ENCODE measurements at regions of chr5 and their contacts with region 1.

Region 1: DNA sequence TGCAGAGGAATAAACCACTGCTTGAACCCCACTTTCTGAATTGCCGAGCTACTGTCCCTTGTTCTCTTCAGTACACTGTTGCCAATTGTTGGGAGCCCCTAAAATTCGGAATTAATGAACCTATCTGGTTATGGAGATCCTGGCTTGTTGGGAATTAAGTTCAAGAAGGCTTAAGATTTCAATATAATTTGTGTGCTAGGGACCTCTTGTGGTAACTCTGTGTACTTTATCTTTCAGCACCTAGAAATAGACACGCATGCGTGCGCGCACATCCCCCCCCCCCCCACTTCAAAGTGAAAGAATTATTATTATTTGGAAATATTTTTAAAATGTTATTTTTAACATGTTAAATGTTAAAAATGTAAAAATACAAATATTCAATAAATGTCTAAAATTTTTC is 53.3 kb upstream of the FAM169A start:
- DNase-seq: no peak
- H3K4me3 ChIP-seq: no peak overlapping the region
- H3K27ac ChIP-seq: no peak overlapping the region
- H3K4me1 ChIP-seq: no peaks in the 10 kb centered on the region
- H3K27me3 ChIP-seq: peaks cover 0 to 1% (median 0%) of the 10 kb centered on the region in 4 experiments; a peak in 1 of 7 replicates
- CTCF ChIP-seq: peak in 2 of 3 experiments; percentile 41 to 55; a peak in 2 of 4 replicates
- EP300 ChIP-seq: no peak
- POLR2A ChIP-seq: no peak
- RAD21 ChIP-seq: peak; percentile 78 to 81

Region 2: GRCh38 chr5:74766849-74767578 is 152.5 kb before region 1 on chr5 and contains the starts of genes GFM2 and NSA2:
- CTCF ChIA-PET with region 1: interaction called, 10 read pairs
- POLR2A ChIA-PET with region 1: no interaction called
- DNase-seq: peak; percentile 84 to 95
- H3K4me3 ChIP-seq: peak within 1 kb of the TSS; percentile 86 to 100 (median 93)
- H3K27ac ChIP-seq: peak within 1 kb of the TSS; percentile 31; the same call in 1 of the 2 replicates
- H3K4me1 ChIP-seq: peaks cover 0 to 4% (median 2%) of the 10 kb centered on the region in 4 experiments; a peak in 2 of 7 replicates
- H3K27me3 ChIP-seq: no peaks in the 10 kb centered on the region
- CTCF ChIP-seq: no peak
- EP300 ChIP-seq: 0 out of 3 replicates have a peak, but pooled peaks of 1 of the 2 experiments have one; percentile 45
- POLR2A ChIP-seq: peak in 1 of 2 experiments; percentile 69; a peak in 1 of 3 replicates
- RAD21 ChIP-seq: 0 out of 4 replicates have a peak, but pooled peaks have one; percentile 0 to 4
- total RNA-seq, gene GFM2: 29.5 and 30.6 TPM in 2 replicates
- total RNA-seq, gene NSA2: 66.6 and 68.7 TPM in 2 replicates

Region 3: GRCh38 chr5:74934949-74935751 is 15.7 kb after region 1 on chr5:
- CTCF ChIA-PET with region 1: interaction called, 13 read pairs
- POLR2A ChIA-PET with region 1: interaction called, 3 read pairs
- DNase-seq: no peak
- H3K4me3 ChIP-seq: no peak overlapping the region
- H3K27ac ChIP-seq: no peak overlapping the region
- H3K4me1 ChIP-seq: peaks cover 0 to 6% (median 5%) of the 10 kb centered on the region in 4 experiments; a peak in 3 of 7 replicates
- H3K27me3 ChIP-seq: no peaks in the 10 kb centered on the region
- CTCF ChIP-seq: peak in 1 of 3 experiments; percentile 28; a peak in 2 of 4 replicates
- EP300 ChIP-seq: no peak
- POLR2A ChIP-seq: no peak
- RAD21 ChIP-seq: peak; percentile 13 to 28; a peak in 3 of 4 replicates

Region 4: GRCh38 chr5:74953940-74954720 is 34.6 kb after region 1 on chr5:
- CTCF ChIA-PET with region 1: no interaction called
- POLR2A ChIA-PET with region 1: no interaction called
- DNase-seq: no peak
- H3K4me3 ChIP-seq: no peak overlapping the region
- H3K27ac ChIP-seq: no peak overlapping the region
- H3K4me1 ChIP-seq: no peaks in the 10 kb centered on the region
- H3K27me3 ChIP-seq: no peaks in the 10 kb centered on the region
- CTCF ChIP-seq: no peak
- EP300 ChIP-seq: no peak
- POLR2A ChIP-seq: no peak
- RAD21 ChIP-seq: no peak